GM18951 (cell line): ENCODE measurements at regions of chr2 and their contacts with region 1.

Region 1: DNA sequence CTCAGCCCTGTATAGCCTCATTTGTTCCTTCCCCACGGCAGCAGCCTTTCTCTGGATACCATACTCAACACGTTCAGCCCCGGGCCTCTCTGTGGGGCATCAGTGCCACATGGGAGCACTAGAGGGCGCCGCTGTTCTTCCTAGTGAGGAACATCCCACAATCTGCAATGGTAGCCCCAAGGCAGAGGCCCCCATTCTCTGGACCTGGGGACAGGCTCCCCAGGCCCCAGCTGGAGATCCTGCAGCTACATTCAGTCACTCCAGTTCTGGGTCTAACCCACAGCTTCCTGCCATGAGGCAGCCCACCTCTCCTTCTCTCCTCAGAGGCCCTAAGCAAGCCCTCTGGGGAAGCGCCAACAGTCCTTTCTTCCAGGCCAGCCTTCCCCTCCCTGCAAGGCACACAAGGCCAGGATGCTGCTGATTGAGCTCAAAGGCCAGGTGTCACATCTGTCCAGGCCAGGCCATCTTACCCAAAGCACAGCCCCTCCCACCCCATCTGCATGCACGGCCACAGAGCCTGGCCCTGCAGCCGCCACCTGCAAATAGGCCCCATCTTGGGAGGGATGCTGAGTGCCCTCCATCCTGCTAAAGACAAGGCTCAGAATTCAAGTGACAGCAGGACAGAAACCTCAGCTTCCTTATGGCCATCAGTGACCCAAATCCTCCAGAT is 14.3 kb upstream of the SFXN5 start:
- POLR2A ChIP-seq: no peak

Region 2: DNA sequence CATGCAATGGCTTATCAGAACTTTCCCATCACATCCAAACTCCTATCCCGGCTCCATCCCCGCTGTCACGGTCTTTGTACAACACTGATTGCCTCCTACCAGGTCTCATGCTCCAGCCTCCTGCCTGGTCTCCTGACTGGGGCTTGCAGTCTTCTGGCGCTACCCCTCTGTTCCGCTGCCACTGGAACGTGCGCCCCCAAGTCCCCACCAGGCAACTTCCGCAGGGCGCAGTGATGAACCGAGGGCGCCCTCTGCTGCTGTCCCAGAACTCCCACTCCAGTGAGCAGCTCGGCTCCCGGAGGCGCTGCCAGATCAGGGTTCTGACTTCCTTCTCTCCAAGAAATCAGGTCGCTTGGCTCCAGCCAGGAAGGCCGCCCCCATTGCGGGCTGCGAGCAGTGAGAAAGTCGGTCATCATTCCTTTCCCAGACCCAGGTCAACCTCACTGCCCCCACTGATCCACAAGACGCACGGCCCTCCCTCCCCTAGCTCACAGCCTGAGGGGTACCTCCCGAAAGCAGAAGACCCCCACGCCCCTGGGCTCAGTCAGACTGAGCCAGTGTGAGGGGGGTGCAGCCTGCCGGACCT is 70.8 kb after region 1 on chr2:
- in situ Hi-C with region 1: loop called (anchors 10 kb)
- POLR2A ChIP-seq: no peak

Region 3: DNA sequence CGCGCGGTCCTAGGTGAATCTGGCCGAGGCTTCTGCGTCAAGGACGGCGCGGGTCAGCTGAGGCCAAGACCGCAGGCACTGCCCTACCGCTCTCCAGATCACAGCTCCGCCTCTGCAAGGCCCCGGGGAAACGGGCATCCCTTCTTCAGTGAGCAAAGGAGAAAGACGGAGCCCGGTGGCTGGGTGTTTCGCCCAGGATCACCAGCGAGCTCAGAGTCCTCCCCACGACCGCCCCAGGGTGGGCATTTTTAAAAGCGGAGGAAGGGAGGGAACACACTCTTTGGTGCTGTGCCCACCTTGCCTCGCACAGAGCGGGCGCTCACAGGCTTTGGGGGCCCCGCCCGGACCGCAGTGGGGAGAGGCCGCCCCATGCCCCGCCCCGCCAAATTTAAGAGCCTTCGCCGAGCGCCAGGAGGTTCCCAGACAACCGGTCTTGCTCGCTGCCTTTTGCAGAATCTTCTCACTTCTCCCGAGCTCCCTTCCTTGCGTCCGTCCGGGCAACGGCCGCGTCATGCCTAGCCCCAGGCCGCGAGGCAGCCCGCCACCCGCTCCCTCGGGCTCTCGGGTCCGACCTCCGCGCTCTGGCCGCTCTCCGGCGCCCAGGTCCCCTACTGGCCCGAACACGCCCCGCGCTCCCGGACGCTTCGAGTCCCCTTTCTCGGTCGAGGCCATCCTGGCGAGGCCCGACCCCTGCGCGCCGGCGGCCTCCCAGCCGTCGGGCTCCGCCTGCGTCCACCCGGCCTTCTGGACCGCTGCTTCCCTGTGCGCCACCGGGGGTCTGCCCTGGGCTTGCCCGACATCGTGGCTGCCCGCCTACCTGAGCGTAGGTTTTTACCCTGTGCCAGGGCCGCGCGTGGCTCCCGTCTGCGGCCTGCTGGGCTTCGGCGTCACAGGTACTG is 116.6 kb after region 1 on chr2 and contains the start of gene NOTO:
- in situ Hi-C with region 1: no loop called
- POLR2A ChIP-seq: no peak